ENCODE measurements at regions of chr13 and their contacts with region 1.

Region 1: GRCh38 chr13:113393563-113394338 is 29.8 kb upstream of the GRTP1 start:
- DNase-seq: peak; percentile 88 to 94
- H3K4me3 ChIP-seq: peak overlapping the region; percentile 63 to 82 (median 78)
- H3K27ac ChIP-seq: peak overlapping the region in 4 of 5 donors; percentile 57 to 76 (median 70)
- H3K4me1 ChIP-seq: peaks cover 4 to 30% (median 18%) of the 10 kb centered on the region in 4 donors
- H3K27me3 ChIP-seq: no peaks in the 10 kb centered on the region
- CTCF ChIP-seq: peak in 4 of 7 experiments; percentile 21 to 98 (median 92)
- EP300 ChIP-seq: no peak
- POLR2A ChIP-seq: no peak

Region 2: DNA sequence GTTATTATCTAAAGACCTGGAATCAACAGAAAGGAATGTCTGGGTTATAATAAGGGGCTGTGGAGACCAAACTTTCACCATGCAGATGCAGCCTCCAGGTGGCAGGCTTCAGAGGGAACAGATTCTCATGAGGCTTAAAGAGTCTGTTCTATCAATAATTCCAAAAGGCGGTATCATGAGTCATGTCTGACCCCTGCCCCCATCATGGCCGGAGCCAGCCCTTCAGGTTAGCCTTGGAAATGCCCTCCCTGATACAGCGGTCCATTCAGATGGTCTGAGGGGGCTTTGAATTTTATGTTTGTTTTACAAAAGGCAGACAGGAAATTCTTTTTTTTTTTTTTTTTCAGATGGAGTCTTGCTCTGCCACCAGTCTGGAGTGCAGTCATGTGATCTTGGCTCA is 118.4 kb before region 1 on chr13:
- intact Hi-C with region 1: loop called (anchors 10 kb)
- DNase-seq: peak; percentile 50 to 79
- H3K4me3 ChIP-seq: no peak overlapping the region
- H3K27ac ChIP-seq: no peak overlapping the region
- H3K4me1 ChIP-seq: peaks cover 0 to 11% (median 4%) of the 10 kb centered on the region in 4 donors
- H3K27me3 ChIP-seq: no peaks in the 10 kb centered on the region
- CTCF ChIP-seq: peak in 4 of 7 experiments; percentile 36 to 58 (median 42)
- EP300 ChIP-seq: no peak
- POLR2A ChIP-seq: no peak

Region 3: GRCh38 chr13:113544071-113544891 is 150.5 kb after region 1 on chr13:
- intact Hi-C with region 1: no loop called
- DNase-seq: peak in 1 of 2 donors; percentile 59
- H3K4me3 ChIP-seq: no peak overlapping the region
- H3K27ac ChIP-seq: no peak overlapping the region
- H3K4me1 ChIP-seq: peaks cover 0 to 44% (median 28%) of the 10 kb centered on the region in 4 donors
- H3K27me3 ChIP-seq: no peaks in the 10 kb centered on the region
- CTCF ChIP-seq: no peak
- EP300 ChIP-seq: no peak
- POLR2A ChIP-seq: no peak

Measured in stomach (tissue), 19 donors.